Body of pancreas (tissue), 4 donors: ENCODE measurements at regions of chr17 and their contacts with region 1.

Region 1: GRCh38 chr17:40536295-40537171 is 28.7 kb downstream of the CCR7 start:
- DNase-seq: peak in 1 of 4 donors; percentile 38
- ATAC-seq: peak; percentile 7
- H3K4me3 ChIP-seq: no peak overlapping the region
- H3K27ac ChIP-seq: peak overlapping the region in 3 of 4 donors; percentile 63 to 88 (median 85)
- H3K4me1 ChIP-seq: peaks cover 42% of the 10 kb centered on the region
- H3K27me3 ChIP-seq: no peaks in the 10 kb centered on the region
- CTCF ChIP-seq: no peak
- POLR2A ChIP-seq: no peak

Region 2: GRCh38 chr17:40443583-40444327 is 92.8 kb before region 1 on chr17:
- intact Hi-C with region 1: loop called (anchors 10 kb)
- DNase-seq: peak; percentile 64 to 79 (median 71)
- ATAC-seq: peak; percentile 68
- H3K4me3 ChIP-seq: peak overlapping the region in 1 of 2 donors; percentile 11
- H3K27ac ChIP-seq: peak overlapping the region in 3 of 4 donors; percentile 19 to 64 (median 55)
- H3K4me1 ChIP-seq: peaks cover 31% of the 10 kb centered on the region
- H3K27me3 ChIP-seq: peaks cover 0 to 5% of the 10 kb centered on the region in 2 donors
- CTCF ChIP-seq: peak in 3 of 7 experiments; percentile 21 to 39 (median 29)
- POLR2A ChIP-seq: peak in 1 of 3 donors; percentile 0